Caco-2 (cell line): ENCODE measurements at regions of chr13 and their contacts with region 1.

Region 1: DNA sequence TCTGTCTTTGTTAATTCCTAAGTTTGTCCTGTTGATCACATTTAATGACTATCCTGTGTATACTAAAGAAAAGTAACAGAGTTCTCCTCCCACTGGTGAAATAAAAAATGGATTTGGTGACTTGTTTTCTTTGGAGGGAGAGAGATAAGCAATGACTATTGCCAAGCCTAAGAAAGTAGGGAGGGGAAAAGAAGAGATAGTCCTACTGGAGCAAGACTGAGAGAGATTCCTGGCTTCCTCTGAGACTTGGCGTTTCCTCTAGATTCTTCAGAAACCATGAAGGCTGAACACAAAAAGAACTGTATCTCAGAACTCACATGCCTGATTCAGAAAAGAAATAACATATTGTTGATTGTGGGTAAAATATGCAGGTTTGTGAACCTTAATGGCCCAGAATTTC is 406.5 kb downstream of the FOXO1 start:
- DNase-seq: no peak
- H3K4me3 ChIP-seq: no peak overlapping the region
- H3K4me3 Mint-ChIP-seq: no peak overlapping the region
- H3K27ac Mint-ChIP-seq: no peak overlapping the region
- H3K4me1 ChIP-seq: no peaks in the 10 kb centered on the region
- H3K4me1 Mint-ChIP-seq: peaks cover 13% of the 10 kb centered on the region
- H3K27me3 ChIP-seq: no peaks in the 10 kb centered on the region
- H3K27me3 Mint-ChIP-seq: peaks cover 2% of the 10 kb centered on the region
- CTCF ChIP-seq: no peak

Region 2: GRCh38 chr13:39737047-39737446 is 522.9 kb before region 1 on chr13:
- CTCF ChIA-PET with region 1: no interaction called
- POLR2A ChIA-PET with region 1: no interaction called
- intact Hi-C with region 1: no loop called
- DNase-seq: no peak
- H3K4me3 ChIP-seq: no peak overlapping the region
- H3K4me3 Mint-ChIP-seq: no peak overlapping the region
- H3K27ac Mint-ChIP-seq: no peak overlapping the region
- H3K4me1 ChIP-seq: no peaks in the 10 kb centered on the region
- H3K4me1 Mint-ChIP-seq: no peaks in the 10 kb centered on the region
- H3K27me3 ChIP-seq: no peaks in the 10 kb centered on the region
- H3K27me3 Mint-ChIP-seq: no peaks in the 10 kb centered on the region
- CTCF ChIP-seq: no peak

Region 3: GRCh38 chr13:40217675-40218074 is 42.2 kb before region 1 on chr13:
- CTCF ChIA-PET with region 1: no interaction called
- POLR2A ChIA-PET with region 1: no interaction called
- intact Hi-C with region 1: loop called (anchors 5 kb)
- DNase-seq: no peak
- H3K4me3 ChIP-seq: no peak overlapping the region
- H3K4me3 Mint-ChIP-seq: no peak overlapping the region
- H3K27ac Mint-ChIP-seq: no peak overlapping the region
- H3K4me1 ChIP-seq: 0 out of 2 replicates have a peak, but pooled peaks cover 4% of the 10 kb centered on the region
- H3K4me1 Mint-ChIP-seq: no peaks in the 10 kb centered on the region
- H3K27me3 ChIP-seq: no peaks in the 10 kb centered on the region; the same call in 1 of the 2 replicates
- H3K27me3 Mint-ChIP-seq: no peaks in the 10 kb centered on the region
- CTCF ChIP-seq: no peak